Activated CD4-positive, alpha-beta T cell treated with anti-CD3 and anti-CD28 coated beads for 36 hours (primary cell): ENCODE measurements at regions of chr15 and their contacts with region 1.

Region 1: DNA sequence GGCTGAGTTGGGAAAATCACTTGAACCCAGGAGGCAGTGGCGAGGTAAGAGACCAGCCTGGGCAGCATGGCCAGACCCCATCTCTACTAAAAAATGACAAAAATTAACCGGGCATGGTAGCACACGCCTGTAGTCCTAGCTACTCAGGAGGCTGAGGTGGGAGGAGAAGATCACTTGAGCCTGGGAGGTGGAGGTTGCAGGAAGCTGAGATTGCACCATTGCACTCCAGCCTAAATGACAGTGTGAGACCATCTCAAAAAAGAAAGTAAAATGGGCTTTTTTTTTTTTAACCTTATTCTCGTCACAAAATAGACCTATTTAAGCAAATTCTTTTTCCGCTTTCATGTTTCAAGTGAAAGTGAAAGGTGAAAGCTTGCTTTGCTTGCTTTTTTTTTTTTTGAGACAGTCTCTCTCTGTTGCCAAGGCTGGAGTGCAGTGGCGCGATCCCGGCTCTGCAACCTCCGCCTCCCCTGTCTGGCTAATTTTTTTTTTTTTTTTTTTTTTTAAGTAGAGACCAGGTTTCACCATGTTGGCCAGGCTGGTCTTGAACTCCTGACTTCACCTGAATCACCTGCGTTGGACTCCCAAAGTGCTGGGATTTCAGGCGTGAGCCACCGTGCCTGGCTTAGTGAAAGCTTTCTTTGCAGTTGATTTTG is 3.6 kb downstream of the PDIA3 start:
- DNase-seq: peak; percentile 69
- ATAC-seq: peak; percentile 46
- H3K4me3 Mint-ChIP-seq: peak overlapping the region; percentile 92
- H3K27ac Mint-ChIP-seq: peak overlapping the region; percentile 82
- H3K4me1 Mint-ChIP-seq: peaks cover 45% of the 10 kb centered on the region
- H3K27me3 Mint-ChIP-seq: no peaks in the 10 kb centered on the region

Region 2: DNA sequence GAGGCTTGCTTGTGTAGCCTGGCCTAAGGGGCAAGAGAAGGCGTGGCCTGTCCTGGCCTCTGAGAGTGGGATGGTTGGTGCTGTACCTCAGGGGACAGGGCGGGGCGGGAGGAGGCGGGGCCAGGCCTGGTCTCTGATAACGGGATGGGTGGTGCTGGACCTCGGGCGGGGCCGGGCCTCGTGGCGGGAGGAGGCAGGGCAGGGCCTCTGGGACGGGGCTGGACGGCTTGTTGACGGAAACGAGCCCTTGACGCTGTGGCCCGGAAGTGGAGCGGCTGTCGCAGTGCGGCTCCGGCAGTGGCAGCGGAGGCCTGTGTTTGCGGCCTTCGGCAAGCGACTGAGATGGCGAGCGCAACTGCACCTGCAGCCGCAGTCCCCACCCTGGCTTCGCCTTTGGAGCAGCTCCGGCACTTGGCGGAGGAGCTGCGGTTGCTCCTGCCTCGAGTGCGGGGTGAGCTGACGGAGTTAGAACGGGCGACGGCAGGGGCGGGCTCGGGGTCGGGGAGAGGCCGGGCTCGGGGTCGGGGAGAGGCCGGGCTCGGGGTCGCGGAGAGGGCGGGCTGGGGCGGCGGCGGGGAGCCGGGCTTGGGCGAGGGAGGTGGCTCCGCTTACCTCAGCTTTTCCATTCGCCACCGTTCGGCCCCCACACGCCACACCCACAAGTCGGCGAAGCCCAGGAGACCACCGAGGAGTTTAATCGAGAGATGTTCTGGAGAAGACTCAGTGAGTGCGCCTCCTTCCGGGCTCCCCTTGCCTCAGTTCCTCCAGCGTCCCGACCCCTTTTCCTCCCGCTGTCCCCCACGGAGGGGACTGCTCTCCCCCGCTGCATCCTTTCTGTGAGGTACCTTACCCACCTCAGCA is 564.4 kb before region 1 on chr15 and contains the start of gene CCNDBP1:
- CTCF ChIA-PET with region 1: no interaction called
- POLR2A ChIA-PET with region 1: no interaction called
- intact Hi-C with region 1: loop called in 1 of 2 experiments (anchors 5 kb)
- DNase-seq: peak; percentile 94
- ATAC-seq: peak; percentile 96
- H3K4me3 Mint-ChIP-seq: peak within 1 kb of the TSS; percentile 90
- H3K27ac Mint-ChIP-seq: peak within 1 kb of the TSS; percentile 94
- H3K4me1 Mint-ChIP-seq: peaks cover 26% of the 10 kb centered on the region
- H3K27me3 Mint-ChIP-seq: no peaks in the 10 kb centered on the region
- total RNA-seq, gene CCNDBP1: 45.8 to 51.6 TPM

Region 3: DNA sequence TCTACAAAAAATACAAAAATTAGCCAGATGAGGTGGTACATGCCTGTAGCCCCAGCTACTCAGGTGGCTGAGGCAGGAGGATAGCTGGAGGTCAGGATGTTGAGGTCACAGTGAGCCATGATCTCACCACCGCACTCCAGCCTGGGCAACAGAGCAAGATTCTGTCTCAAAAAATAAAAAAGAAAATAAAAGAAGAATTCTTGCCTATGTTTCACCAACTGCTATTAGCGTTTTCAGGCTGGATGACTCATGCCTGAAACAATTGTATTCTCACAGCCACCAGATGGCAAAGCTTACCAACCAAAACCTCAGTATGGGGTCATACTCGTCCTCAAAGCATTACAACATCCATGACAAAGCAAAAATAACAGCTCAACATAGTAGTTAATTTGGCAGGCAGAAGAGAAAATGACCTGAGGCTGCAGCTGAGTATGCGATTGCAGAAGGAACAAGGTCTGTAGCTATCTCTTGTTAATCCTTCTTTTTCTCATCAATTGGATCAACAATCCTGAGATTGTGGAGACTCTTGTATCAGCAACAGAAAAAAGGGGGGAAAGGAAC is 309.0 kb before region 1 on chr15:
- CTCF ChIA-PET with region 1: no interaction called
- POLR2A ChIA-PET with region 1: interaction called, 3 read pairs
- intact Hi-C with region 1: loop called in 1 of 2 experiments (anchors 1 kb)
- DNase-seq: peak; percentile 64
- ATAC-seq: peak; percentile 95
- H3K4me3 Mint-ChIP-seq: no peak overlapping the region
- H3K27ac Mint-ChIP-seq: peak overlapping the region; percentile 91
- H3K4me1 Mint-ChIP-seq: peaks cover 7% of the 10 kb centered on the region
- H3K27me3 Mint-ChIP-seq: no peaks in the 10 kb centered on the region

Region 4: GRCh38 chr15:43769584-43770228 is 19.9 kb after region 1 on chr15:
- CTCF ChIA-PET with region 1: interaction called, 7 read pairs
- POLR2A ChIA-PET with region 1: interaction called, 3 read pairs
- intact Hi-C with region 1: loop called in 1 of 2 experiments (anchors 2 kb)
- DNase-seq: peak; percentile 79
- ATAC-seq: peak; percentile 81
- H3K4me3 Mint-ChIP-seq: no peak overlapping the region
- H3K27ac Mint-ChIP-seq: peak overlapping the region; percentile 21
- H3K4me1 Mint-ChIP-seq: no peaks in the 10 kb centered on the region
- H3K27me3 Mint-ChIP-seq: no peaks in the 10 kb centered on the region

Region 5: DNA sequence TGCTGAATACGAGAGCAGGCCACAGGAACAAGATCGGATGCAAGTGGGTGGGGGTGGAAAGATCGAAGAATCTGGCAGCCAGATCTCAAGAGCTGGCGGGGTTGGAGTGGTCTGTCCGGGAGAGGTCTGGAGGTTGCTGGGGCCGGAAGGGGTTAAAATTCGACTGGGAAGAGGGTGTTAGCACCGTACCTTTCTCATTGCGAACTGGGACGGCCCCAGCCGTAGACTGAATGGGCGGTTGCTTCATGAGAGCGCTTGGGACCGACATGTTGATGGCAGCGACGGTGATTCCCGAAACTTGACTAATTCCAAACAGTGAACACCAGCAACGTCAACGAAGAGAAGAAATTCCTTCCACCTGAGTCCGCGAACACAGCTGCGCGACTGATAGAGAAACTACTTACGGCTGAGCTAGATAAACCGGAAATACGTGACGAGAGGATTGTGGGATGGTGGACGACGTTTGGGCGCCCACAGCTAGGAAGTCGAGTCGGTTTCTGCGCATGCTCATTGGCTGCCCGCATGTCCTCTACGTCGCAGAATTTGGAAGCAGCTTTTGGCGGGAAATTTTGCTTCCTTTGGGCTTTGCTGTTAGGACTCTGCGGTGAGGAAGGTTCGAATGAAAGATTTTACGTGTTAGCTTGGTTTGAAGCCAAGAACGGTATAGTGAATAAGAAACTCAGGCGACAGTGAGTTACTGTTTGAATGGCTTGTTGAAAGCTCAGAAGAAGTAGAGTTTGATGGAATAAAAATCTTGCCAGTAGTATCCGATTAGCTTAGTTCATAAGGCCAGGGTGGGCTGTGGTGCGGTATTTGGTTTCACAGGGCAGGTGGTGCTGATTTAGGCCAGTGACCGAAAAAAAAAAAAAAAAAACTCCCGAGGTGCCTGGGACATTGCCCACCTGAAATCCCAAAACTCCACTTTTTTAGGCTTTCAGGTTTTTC is 74.8 kb after region 1 on chr15 and contains the start of gene MFAP1:
- CTCF ChIA-PET with region 1: no interaction called
- POLR2A ChIA-PET with region 1: interaction called, 7 read pairs
- intact Hi-C with region 1: loop called (anchors 1 kb)
- DNase-seq: peak; percentile 95
- ATAC-seq: peak; percentile 85
- H3K4me3 Mint-ChIP-seq: peak within 1 kb of the TSS; percentile 100
- H3K27ac Mint-ChIP-seq: peak within 1 kb of the TSS; percentile 99
- H3K4me1 Mint-ChIP-seq: peaks cover 53% of the 10 kb centered on the region
- H3K27me3 Mint-ChIP-seq: no peaks in the 10 kb centered on the region
- total RNA-seq, gene MFAP1: 51.3 to 56.2 TPM

Region 6: GRCh38 chr15:44711356-44712107 is 961.7 kb after region 1 on chr15 and contains the start of gene B2M:
- CTCF ChIA-PET with region 1: no interaction called
- POLR2A ChIA-PET with region 1: no interaction called
- intact Hi-C with region 1: loop called in 1 of 2 experiments (anchors 5 kb)
- DNase-seq: peak; percentile 97
- ATAC-seq: peak; percentile 78
- H3K4me3 Mint-ChIP-seq: peak within 1 kb of the TSS; percentile 96
- H3K27ac Mint-ChIP-seq: peak within 1 kb of the TSS; percentile 100
- H3K4me1 Mint-ChIP-seq: peaks cover 34% of the 10 kb centered on the region
- H3K27me3 Mint-ChIP-seq: no peaks in the 10 kb centered on the region
- total RNA-seq, gene B2M: 5,181 to 7,416 TPM